Mammary epithelial cell (primary cell): ENCODE measurements at regions of chr17 and their contacts with region 1.

Region 1: GRCh38 chr17:81553018-81553615 is 964 bp upstream of the FAAP100 start:
- DNase-seq: peak; percentile 80
- H3K4me3 ChIP-seq: peak overlapping the region; percentile 90 to 95 (median 91)
- H3K27ac ChIP-seq: no peak overlapping the region
- H3K4me1 ChIP-seq: peaks cover 28% of the 10 kb centered on the region
- H3K27me3 ChIP-seq: no peaks in the 10 kb centered on the region
- CTCF ChIP-seq: peak in 1 of 2 donors; percentile 37

Region 2: DNA sequence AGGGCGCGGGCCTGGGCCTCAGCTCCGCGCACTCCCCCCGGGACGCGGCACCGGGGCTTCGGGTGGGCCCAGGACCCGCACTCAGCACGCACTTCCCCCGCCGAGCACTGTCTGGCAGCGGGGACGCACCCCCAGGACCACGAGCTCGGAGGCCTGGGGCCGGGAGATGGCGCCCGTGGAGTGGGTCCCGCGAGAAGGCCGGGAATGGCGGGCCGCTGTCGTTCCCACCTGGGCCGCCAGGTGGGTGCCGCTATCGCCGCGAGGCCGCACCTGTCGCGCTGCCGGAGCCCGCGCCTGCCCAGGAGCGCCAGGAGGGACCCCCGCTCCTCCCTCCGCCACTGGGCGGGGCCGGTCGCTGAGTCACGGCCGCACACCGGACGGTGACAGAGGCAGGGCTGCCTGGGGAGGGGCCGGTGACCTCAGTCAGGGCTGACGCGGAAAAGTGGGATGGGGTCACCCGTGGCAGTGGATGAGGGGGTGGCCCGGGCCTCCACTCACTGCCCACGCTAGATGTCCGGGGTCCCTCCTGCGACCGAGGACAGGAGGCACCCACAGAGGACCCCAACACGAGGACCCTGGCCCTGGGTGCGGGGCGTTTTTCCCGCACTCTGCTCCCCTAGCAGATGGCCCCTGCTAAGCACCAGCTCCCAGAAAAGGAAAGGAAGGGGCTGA is 33.7 kb before region 1 on chr17:
- CTCF ChIA-PET with region 1: no interaction called
- dilution Hi-C with region 1: no loop called
- in situ Hi-C with region 1: no loop called
- intact Hi-C with region 1: loop called (anchors 2 kb)
- DNase-seq: peak; percentile 40
- H3K4me3 ChIP-seq: peak overlapping the region; percentile 23 to 48 (median 45)
- H3K27ac ChIP-seq: no peak overlapping the region
- H3K4me1 ChIP-seq: peaks cover 46% of the 10 kb centered on the region
- H3K27me3 ChIP-seq: no peaks in the 10 kb centered on the region
- CTCF ChIP-seq: peak; percentile 43 to 62

Region 3: DNA sequence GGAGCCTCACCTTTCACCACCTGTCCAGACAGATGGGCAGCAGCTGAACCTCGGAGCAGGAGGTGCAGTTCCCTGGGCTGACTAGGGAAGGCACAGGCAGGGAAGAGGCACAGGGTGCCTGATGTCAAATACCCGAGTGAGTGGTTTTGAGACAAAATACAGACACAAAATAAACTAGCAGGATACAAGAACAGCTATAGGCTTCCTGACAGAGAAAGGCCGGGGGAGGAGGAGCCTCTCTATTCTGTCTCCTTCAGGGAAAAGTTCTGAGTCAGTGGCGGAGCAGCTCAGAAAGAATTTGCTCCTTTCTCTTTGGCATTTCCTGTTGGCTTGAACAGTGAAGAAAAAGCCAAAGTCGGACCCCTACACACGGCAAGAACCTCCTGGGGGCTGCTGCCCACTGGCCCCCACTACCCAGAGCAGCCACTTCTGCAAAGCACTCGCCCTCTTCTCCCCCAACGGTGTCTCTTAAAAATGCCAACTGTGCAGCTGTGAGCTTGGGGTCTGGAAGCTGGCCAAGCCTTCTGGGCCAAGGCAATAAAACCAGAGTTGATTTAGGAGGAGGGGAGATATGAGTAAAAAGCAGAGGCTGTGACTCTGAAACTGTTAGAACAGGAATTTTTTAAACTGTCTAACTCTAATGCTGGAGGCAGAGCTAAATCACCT is 13.5 kb after region 1 on chr17:
- CTCF ChIA-PET with region 1: no interaction called
- dilution Hi-C with region 1: no loop called
- in situ Hi-C with region 1: no loop called
- intact Hi-C with region 1: loop called (anchors 2 kb)
- DNase-seq: peak; percentile 79
- H3K4me3 ChIP-seq: peak overlapping the region in 2 of 3 experiments; percentile 10 to 12
- H3K27ac ChIP-seq: peak overlapping the region; percentile 8
- H3K4me1 ChIP-seq: peaks cover 33% of the 10 kb centered on the region
- H3K27me3 ChIP-seq: no peaks in the 10 kb centered on the region
- CTCF ChIP-seq: no peak